ENCODE measurements at regions of chr1 and their contacts with region 1.

Region 1: GRCh38 chr1:41496080-41497055 is 11.9 kb upstream of the EDN2 start:
- DNase-seq: peak; percentile 70
- H3K4me3 Mint-ChIP-seq: peak overlapping the region; percentile 50
- H3K27ac Mint-ChIP-seq: no peak overlapping the region
- H3K4me1 Mint-ChIP-seq: peaks cover 4% of the 10 kb centered on the region
- H3K27me3 Mint-ChIP-seq: peaks cover 16% of the 10 kb centered on the region

Region 2: DNA sequence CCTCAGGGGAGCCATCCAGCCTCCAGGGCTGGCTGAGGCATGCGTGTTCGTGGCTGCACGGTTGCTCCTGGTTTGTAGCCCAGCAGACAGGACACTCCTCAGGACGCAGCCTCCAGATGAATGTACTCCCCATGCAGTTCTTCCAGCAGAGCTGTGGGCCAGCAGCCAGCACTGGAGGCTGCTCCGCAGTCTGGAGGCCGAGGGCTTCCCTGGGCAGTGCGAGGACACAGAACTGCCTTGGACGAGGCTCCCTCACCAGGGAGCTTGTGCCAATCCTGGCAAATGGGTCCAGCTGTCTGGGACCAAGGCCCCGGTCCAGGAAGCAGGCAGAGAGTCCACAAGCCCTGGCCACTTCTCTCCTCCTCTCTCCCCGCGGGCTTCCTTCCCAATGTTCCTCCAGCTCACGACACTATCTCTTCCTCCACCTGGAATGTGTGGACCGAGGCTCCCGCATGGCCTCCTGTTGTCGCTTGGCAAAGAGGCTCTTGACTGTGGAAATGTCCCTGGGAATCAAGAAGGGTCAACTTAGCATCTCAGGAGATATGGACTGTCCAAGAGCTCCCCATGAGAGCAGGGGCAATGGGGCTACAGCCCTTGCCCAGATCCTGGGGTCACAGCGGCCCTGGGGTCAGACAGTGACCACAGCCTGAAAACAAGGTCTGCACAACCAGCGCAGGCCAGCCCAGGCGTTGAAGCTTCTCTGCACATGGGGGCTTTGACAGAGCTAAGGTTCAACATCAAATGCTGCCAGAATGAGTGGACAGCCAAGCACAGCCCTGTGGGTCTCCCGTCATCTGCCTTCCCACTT is 17.2 kb before region 1 on chr1:
- CTCF ChIA-PET with region 1: interaction called, 14 read pairs
- POLR2A ChIA-PET with region 1: no interaction called
- intact Hi-C with region 1: no loop called
- DNase-seq: no peak
- H3K4me3 Mint-ChIP-seq: no peak overlapping the region
- H3K27ac Mint-ChIP-seq: no peak overlapping the region
- H3K4me1 Mint-ChIP-seq: no peaks in the 10 kb centered on the region
- H3K27me3 Mint-ChIP-seq: peaks cover 5% of the 10 kb centered on the region

Region 3: GRCh38 chr1:41516168-41517061 is 20.0 kb after region 1 on chr1:
- CTCF ChIA-PET with region 1: interaction called, 15 read pairs
- POLR2A ChIA-PET with region 1: no interaction called
- intact Hi-C with region 1: no loop called
- DNase-seq: peak; percentile 78
- H3K4me3 Mint-ChIP-seq: no peak overlapping the region
- H3K27ac Mint-ChIP-seq: peak overlapping the region; percentile 20
- H3K4me1 Mint-ChIP-seq: peaks cover 6% of the 10 kb centered on the region
- H3K27me3 Mint-ChIP-seq: no peaks in the 10 kb centered on the region

Measured in activated CD4-positive, alpha-beta memory T cell treated with anti-CD3 and anti-CD28 coated beads for 36 hours (primary cell).